ENCODE measurements at regions of chrX and their contacts with region 1.

Region 1: GRCh38 chrX:153494541-153495361 is at the start of gene BGN:
- DNase-seq: no peak
- H3K4me3 ChIP-seq: peak within 1 kb of the TSS; percentile 71
- H3K27me3 ChIP-seq: no peaks in the 10 kb centered on the region
- CTCF ChIP-seq: peak; percentile 46
- polyA plus RNA-seq, gene BGN: 284 and 487 TPM in 2 replicates

Region 2: DNA sequence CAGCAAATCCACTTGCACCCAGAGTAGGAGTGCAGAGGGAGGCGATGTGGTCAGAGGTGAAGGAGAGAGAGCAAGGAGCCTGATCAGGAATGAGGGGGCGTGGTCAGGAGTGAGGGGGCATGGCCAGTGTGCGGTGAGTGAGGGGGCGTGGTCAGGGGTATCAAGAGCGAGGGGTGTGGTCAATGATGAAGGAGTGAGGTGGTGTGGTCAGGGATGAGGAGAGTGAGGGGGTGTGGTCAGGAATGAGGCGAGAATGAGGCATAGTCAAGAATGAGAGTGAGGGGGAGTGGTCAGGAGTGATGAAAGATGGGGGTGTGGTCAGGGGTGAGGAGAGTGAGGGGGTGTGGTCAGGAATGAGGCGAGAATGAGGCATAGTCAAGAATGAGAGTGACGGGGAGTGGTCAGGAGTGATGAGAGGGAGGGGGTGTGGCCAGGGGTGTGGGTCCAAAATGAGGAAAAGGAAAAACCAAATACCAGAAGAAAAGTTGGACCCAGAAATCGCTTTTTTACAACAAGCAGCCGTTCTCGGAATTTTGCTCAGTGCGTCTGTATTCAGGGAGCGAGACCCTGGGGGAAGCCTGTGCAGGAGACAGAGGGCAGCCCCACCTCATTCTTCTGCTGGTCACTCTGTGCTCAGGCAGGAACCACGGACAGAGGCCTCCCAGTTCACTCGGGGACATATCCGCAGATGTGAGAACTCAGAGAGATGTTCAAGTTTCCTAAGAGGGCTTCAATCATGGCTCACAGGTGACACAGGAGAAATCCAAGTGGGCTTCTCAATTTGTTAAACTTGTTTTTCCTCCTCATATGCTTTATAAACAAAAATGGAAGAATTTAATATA is 268.2 kb before region 1 on chrX:
- CTCF ChIA-PET with region 1: no interaction called
- POLR2A ChIA-PET with region 1: no interaction called
- DNase-seq: no peak
- H3K4me3 ChIP-seq: no peak overlapping the region
- H3K27me3 ChIP-seq: no peaks in the 10 kb centered on the region
- CTCF ChIP-seq: no peak

Region 3: DNA sequence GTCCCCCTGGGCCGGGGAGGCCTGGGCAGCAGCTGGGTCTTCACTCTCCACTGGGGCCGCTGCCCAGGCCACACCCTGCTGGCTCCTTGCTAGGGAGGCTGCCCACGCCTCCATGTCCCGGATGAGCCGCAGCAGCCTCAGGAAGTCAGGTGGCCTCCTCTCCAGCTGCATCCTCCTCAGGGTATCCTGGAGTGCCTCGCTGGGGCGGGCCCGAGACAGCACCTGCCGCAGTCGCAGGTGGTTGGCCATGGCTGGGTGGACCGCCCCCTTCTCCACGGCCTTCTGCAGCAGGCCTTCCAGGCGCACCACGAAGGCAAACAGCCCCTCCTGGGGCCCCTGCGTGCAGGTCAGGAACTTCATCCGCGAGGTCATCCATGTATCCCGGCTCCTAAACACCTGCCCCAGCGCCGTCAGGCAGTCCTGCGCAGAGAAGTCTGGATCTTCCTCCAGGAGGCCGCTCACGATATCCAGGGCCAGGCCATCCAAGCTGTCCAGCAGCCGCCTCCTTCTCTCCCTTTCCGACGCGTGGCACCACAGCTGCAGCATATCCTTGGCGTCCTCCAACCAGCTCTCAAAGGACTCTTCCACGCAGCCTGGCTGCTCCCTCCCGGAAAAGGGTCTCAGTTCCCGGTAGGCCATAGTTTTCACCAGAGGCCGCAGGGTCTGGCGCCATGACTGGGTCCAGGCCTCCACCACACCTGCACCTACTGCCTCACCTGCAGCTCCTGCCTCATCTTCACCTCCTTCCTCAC is 175.3 kb before region 1 on chrX:
- CTCF ChIA-PET with region 1: no interaction called
- POLR2A ChIA-PET with region 1: no interaction called
- DNase-seq: no peak
- H3K4me3 ChIP-seq: no peak overlapping the region
- H3K27me3 ChIP-seq: peaks cover 5% of the 10 kb centered on the region
- CTCF ChIP-seq: no peak

Region 4: GRCh38 chrX:153470435-153471363 is 24.1 kb before region 1 on chrX and contains the start of gene HAUS7:
- CTCF ChIA-PET with region 1: interaction called, 77 read pairs
- POLR2A ChIA-PET with region 1: interaction called, 3 read pairs
- DNase-seq: no peak
- H3K4me3 ChIP-seq: peak within 1 kb of the TSS; percentile 60
- H3K27me3 ChIP-seq: no peaks in the 10 kb centered on the region
- CTCF ChIP-seq: peak; percentile 75
- polyA plus RNA-seq, gene HAUS7: 26.8 and 38.4 TPM in 2 replicates